ENCODE measurements at regions of chr1 and their contacts with region 1.

Region 1: DNA sequence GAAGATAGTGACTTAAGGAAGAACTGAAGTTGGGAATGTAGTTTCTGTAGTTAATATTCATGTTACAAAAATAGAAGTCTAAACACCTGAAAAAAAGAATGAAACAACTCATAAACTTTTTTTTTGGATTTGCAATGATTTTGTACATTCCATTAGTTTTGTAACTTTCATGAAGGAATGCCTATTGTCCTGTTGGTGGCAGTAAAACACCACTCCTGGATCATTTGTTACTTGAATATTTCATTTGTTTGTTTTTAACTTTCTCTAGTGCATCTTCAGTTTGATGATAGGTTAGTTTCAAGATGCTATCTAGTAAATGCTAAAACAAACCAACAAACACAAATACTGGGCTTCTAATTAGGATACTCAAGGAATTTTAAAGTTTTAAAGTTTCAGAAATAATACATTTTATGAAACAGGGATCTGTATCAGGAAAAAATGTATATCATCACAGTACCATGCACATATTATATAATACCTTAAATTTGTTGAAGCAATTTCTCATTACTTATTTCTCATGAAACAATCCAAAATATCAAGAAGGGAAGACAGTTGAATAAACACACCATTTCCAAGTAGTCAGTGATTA is 229.7 kb upstream of the CACYBP start:
- DNase-seq: no peak
- H3K4me3 ChIP-seq: no peak overlapping the region
- H3K27ac ChIP-seq: no peak overlapping the region
- H3K4me1 ChIP-seq: no peaks in the 10 kb centered on the region
- H3K27me3 ChIP-seq: no peaks in the 10 kb centered on the region
- CTCF ChIP-seq: peak; percentile 62 to 69 (median 67)
- EP300 ChIP-seq: no peak
- POLR2A ChIP-seq: no peak

Region 2: GRCh38 chr1:174747613-174748012 is 22.4 kb before region 1 on chr1:
- in situ Hi-C with region 1: no loop called
- intact Hi-C with region 1: no loop called
- DNase-seq: no peak
- H3K4me3 ChIP-seq: no peak overlapping the region
- H3K27ac ChIP-seq: no peak overlapping the region
- H3K4me1 ChIP-seq: no peaks in the 10 kb centered on the region
- H3K27me3 ChIP-seq: no peaks in the 10 kb centered on the region
- CTCF ChIP-seq: no peak
- EP300 ChIP-seq: no peak
- POLR2A ChIP-seq: no peak

Region 3: DNA sequence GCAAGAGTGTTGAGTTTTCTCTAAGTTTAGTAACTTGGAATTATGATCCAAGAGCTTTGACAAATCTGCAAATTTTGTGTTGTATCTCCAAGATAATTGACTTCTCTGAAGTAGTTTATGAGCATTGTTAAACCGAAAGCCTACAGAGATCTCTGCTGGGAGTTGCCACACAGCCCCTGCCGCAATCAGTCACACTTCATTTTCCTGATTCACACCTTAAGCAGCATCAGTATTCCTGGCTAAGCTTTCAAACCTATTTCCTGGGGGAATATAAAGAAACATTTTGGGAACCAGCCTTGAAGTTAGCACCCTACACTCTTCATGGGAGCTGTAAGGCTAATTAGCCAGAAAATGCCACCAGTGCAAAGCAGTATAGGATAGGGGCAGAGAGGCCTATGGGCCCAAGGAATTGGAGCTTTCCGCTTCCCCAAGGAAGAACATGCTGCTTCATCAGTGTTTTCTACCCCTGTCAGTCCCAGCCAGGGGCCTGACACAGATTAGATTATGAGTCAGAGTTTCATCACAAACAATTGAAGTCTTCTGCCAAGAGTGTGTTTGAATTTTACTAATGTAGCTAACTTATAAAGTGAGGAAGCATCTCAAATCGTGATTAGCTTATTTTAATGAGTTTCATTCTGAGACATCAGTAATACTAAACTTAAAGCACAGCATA is 206.5 kb after region 1 on chr1:
- in situ Hi-C with region 1: loop called in 3 of 4 experiments (anchors 5 to 10 kb)
- intact Hi-C with region 1: no loop called
- DNase-seq: no peak
- H3K4me3 ChIP-seq: no peak overlapping the region
- H3K27ac ChIP-seq: no peak overlapping the region
- H3K4me1 ChIP-seq: peaks cover 0 to 3% (median 0%) of the 10 kb centered on the region in 4 donors
- H3K27me3 ChIP-seq: no peaks in the 10 kb centered on the region
- CTCF ChIP-seq: no peak
- EP300 ChIP-seq: no peak
- POLR2A ChIP-seq: no peak

Region 4: DNA sequence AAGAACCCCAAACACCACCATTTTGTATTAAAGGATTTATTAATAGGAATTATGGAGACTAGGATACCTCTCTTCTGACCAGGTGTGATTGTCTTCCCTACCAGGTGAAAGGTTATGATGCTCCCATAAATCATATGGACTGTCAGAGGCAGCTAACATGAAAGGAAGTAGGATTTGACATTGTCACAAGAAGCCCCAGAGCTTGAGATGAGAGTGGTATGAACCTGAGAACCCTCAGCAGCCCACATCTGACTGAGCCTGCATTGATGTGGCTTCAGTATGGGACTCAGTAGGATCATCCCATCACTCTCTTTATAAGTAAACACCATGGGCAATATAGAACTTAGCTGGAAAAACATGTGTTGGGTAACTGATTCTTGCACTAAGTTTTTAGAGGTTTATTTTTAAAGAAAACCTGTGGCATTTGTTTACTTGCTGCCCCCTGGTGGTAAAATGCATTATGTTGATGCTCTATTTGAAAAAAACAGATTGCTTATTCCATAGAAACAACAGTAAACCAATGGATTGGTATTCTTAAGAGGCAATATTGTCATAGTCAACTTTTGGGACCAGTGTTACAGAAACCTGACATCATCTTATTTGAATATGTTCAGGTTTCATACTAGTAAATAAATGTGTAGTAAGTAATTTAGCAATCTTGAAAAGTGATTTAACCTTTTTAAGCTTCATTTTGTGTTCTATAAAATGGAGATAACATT is 213.1 kb after region 1 on chr1:
- in situ Hi-C with region 1: loop called in 3 of 4 experiments (anchors 5 to 10 kb)
- intact Hi-C with region 1: no loop called
- DNase-seq: no peak
- H3K4me3 ChIP-seq: no peak overlapping the region
- H3K27ac ChIP-seq: no peak overlapping the region
- H3K4me1 ChIP-seq: no peaks in the 10 kb centered on the region
- H3K27me3 ChIP-seq: no peaks in the 10 kb centered on the region
- CTCF ChIP-seq: peak; percentile 62 to 70 (median 64)
- EP300 ChIP-seq: no peak
- POLR2A ChIP-seq: no peak

Region 5: GRCh38 chr1:174990382-174990999 is 220.4 kb after region 1 on chr1:
- in situ Hi-C with region 1: loop called in 2 of 4 experiments (anchors 5 to 10 kb)
- intact Hi-C with region 1: no loop called
- DNase-seq: no peak
- H3K4me3 ChIP-seq: peak overlapping the region; percentile 6 to 58 (median 40)
- H3K27ac ChIP-seq: peak overlapping the region; percentile 67 to 88 (median 82)
- H3K4me1 ChIP-seq: peaks cover 0 to 15% (median 9%) of the 10 kb centered on the region in 4 donors
- H3K27me3 ChIP-seq: no peaks in the 10 kb centered on the region
- CTCF ChIP-seq: no peak
- EP300 ChIP-seq: no peak
- POLR2A ChIP-seq: no peak

Region 6: GRCh38 chr1:175146529-175147213 is 376.6 kb after region 1 on chr1:
- in situ Hi-C with region 1: loop called in 1 of 4 experiments (anchors 25 kb)
- intact Hi-C with region 1: no loop called
- DNase-seq: peak; percentile 68
- H3K4me3 ChIP-seq: no peak overlapping the region
- H3K27ac ChIP-seq: no peak overlapping the region
- H3K4me1 ChIP-seq: peaks cover 0 to 7% (median 0%) of the 10 kb centered on the region in 4 donors
- H3K27me3 ChIP-seq: peaks cover 4% of the 10 kb centered on the region
- CTCF ChIP-seq: peak; percentile 64 to 85 (median 80)
- EP300 ChIP-seq: no peak
- POLR2A ChIP-seq: no peak